Activated CD8-positive, alpha-beta memory T cell treated with anti-CD3 and anti-CD28 coated beads, Interleukin-2, amount 10 ng/mL, durations not matched to agents 7 days and 5 days (primary cell): ENCODE measurements at regions of chr20 and their contacts with region 1.

Region 1: DNA sequence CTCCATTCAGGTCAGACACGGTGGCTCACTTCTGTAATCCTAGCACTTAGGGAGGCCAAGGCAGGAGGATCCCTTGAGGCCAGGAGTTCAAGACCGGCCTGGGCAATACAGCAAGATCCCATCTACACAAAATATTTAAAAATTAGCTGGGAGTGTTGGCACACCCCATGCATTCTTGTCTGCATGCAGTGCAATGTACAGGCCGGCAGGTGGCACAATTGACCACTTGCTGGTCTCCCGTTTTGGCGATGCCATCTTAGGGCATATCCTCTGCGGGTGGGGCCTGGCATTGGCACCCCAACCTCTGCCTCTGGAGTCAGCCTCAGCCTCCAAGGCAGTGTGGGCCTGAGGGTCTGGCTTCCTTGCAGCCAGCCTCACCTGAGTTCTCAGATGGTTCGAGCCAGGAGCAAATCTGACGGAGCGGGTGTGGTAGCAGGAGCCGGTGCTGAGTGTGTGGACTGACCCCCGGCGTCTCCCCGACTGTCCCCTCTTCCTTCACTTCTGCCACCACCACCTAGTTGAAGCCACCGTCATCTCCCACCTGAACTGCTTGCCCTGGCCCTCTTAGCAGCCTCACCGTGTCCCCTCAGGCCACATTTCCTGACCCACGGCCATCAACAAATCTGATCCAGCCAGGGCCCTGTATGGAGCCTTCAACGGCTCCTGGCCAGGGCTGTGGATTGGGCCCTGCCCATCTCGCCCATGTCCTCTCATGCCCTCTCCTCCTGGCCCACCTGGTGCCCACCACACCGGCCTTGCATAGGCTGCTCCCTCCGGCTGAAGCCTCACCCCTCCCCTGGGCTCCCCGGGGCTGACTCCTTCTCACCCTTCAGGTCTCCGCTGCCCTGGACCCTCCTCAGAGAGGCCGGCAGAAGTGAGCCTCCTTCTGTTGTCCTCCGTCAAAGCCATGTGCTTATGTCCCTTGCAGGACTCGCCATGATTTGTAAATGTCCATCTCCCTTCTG is 44.0 kb downstream of the EFCAB8 start:
- DNase-seq: peak; percentile 78
- ATAC-seq: peak; percentile 88
- H3K4me3 Mint-ChIP-seq: no peak overlapping the region
- H3K27ac Mint-ChIP-seq: no peak overlapping the region
- H3K4me1 Mint-ChIP-seq: peaks cover 9% of the 10 kb centered on the region
- H3K27me3 Mint-ChIP-seq: no peaks in the 10 kb centered on the region

Region 2: DNA sequence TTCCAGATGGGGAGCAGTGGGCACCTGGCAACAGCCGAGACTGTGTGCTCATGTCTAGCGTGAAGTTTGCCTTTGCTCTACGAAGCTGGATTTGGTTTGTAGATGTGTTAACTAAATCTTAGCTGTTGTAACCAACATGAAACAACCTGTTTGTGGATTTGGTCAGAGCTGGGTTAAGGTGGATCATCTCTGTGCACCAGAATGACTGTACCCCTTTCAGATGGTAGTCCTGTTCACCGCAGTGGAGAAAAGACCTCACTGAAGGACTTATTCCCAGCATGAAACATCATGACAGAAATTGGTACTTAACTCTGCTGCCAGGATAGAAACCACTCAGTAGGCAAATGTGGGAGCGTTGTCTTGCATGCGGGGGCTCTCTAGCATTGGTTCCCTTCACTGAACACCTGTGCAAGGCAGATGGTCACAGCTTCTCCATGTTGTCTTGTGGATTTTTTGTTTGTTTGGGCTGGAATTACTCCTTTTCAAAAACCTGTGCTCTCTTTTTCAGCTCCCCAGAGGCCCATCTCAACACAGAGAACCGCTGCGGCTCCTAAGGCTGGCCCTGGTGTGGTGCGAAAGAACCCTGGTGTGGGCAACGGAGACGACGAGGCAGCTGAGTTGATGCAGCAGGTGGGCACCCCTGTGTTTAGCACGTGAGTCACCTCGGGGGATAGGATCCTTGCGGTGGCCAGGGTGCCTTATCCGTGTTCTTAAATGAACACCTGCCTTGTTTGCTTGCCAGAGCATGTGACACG is 63.3 kb before region 1 on chr20:
- CTCF ChIA-PET with region 1: no interaction called
- DNase-seq: peak; percentile 52
- ATAC-seq: peak; percentile 60
- H3K4me3 Mint-ChIP-seq: no peak overlapping the region
- H3K27ac Mint-ChIP-seq: no peak overlapping the region
- H3K4me1 Mint-ChIP-seq: peaks cover 42% of the 10 kb centered on the region
- H3K27me3 Mint-ChIP-seq: no peaks in the 10 kb centered on the region

Region 3: DNA sequence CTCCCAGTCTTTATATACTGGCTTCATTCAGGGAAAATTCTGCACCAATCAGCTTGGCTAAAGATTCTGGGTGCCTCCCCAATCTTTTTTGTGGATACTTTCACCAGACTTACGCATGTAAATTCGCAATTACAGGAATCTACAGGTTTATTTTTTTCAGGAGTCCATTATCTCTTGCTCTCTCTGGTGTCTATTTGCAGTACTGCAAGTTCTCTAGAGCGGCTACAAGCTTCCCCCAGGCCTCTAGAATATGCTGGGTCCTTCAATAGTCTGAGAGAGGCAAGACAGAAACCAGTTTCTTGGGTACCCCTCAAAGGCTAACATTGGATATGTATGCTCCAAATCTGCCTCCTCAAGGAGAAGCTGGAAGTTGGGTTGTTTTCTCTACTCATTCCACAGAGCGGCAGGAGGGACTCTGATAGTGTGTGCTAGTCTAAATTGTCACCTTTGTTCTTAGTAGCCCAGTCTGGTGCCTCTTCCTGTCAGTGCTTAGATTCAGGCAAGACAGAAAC is 43.0 kb after region 1 on chr20:
- CTCF ChIA-PET with region 1: interaction called, 26 read pairs
- DNase-seq: no peak
- ATAC-seq: peak; percentile 93
- H3K4me3 Mint-ChIP-seq: no peak overlapping the region
- H3K27ac Mint-ChIP-seq: peak overlapping the region; percentile 76
- H3K4me1 Mint-ChIP-seq: peaks cover 15% of the 10 kb centered on the region
- H3K27me3 Mint-ChIP-seq: peaks cover 2% of the 10 kb centered on the region

Region 4: DNA sequence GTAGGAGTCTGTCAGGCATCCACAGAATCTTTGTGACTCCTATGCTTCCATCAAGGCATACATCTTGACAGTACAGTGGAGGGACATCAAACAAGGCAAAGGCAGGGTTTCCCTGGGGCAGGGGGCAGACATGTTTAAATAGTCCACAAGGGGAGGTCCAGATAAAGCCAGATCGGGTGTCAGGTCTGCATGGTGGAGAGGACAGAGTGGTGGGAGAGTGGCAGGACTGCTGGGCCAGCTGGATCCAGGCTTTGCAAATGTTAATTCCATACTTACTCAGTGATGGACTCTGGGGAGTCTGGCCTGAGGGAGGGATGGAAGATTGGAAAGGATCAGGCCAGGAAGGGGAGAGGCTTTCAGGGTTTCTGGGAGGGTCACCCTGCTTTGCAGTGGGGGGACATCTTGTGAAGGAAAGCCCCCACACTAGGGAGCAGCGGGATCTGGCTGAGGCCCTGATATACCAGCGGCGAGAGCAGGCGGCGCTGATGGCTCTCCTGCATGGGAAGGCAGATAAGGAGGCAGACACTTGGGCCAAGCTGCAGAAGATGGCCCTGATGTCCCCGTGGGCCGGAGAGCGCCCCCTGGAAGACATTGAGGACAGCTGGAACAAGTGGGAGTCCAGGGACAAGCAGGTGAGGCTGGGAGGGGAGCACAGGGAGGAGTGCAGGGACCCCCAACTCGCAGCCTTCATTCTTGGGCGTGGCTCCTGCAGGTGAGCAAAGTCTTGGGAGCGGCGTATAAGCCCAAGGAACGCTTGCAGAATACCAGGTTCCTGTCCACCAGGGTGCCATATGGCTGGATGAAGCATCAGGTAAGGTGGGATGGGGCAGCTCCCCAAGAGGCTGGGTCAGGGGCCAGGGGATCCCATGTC is 56.8 kb after region 1 on chr20:
- CTCF ChIA-PET with region 1: no interaction called
- DNase-seq: no peak
- ATAC-seq: no peak
- H3K4me3 Mint-ChIP-seq: no peak overlapping the region
- H3K27ac Mint-ChIP-seq: no peak overlapping the region
- H3K4me1 Mint-ChIP-seq: peaks cover 22% of the 10 kb centered on the region
- H3K27me3 Mint-ChIP-seq: no peaks in the 10 kb centered on the region

Region 5: DNA sequence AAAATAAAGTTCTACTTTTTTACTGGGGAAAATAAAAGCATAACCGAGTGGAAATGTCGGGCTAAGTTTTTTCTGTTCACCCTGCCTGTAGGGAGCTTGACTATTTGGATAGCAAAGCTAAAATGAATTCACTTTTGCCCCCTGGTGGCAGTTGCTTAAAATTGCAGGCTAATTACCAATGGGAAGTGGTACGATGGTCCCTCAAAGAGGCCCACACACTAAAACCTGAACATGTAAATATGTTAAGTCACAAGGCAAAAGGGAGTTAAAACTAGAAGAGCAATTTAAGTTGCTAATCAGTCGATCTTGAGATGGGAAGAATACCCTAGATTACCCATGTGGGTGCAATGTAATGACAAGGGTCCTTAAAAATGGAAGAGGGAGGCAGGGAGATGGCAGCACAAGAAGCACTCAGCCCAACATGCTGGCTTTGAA is 102.4 kb after region 1 on chr20:
- CTCF ChIA-PET with region 1: interaction called, 32 read pairs
- DNase-seq: no peak
- ATAC-seq: no peak
- H3K4me3 Mint-ChIP-seq: no peak overlapping the region
- H3K27ac Mint-ChIP-seq: no peak overlapping the region
- H3K4me1 Mint-ChIP-seq: peaks cover 3% of the 10 kb centered on the region
- H3K27me3 Mint-ChIP-seq: no peaks in the 10 kb centered on the region

Region 6: GRCh38 chr20:33076662-33077372 is 174.1 kb after region 1 on chr20:
- CTCF ChIA-PET with region 1: interaction called, 33 read pairs
- DNase-seq: no peak
- ATAC-seq: no peak
- H3K4me3 Mint-ChIP-seq: no peak overlapping the region
- H3K27ac Mint-ChIP-seq: no peak overlapping the region
- H3K4me1 Mint-ChIP-seq: no peaks in the 10 kb centered on the region
- H3K27me3 Mint-ChIP-seq: no peaks in the 10 kb centered on the region

Region 7: GRCh38 chr20:33097001-33097400 is 194.3 kb after region 1 on chr20:
- CTCF ChIA-PET with region 1: interaction called, 30 read pairs
- DNase-seq: no peak
- ATAC-seq: no peak
- H3K4me3 Mint-ChIP-seq: no peak overlapping the region
- H3K27ac Mint-ChIP-seq: no peak overlapping the region
- H3K4me1 Mint-ChIP-seq: no peaks in the 10 kb centered on the region
- H3K27me3 Mint-ChIP-seq: no peaks in the 10 kb centered on the region

Region 8: DNA sequence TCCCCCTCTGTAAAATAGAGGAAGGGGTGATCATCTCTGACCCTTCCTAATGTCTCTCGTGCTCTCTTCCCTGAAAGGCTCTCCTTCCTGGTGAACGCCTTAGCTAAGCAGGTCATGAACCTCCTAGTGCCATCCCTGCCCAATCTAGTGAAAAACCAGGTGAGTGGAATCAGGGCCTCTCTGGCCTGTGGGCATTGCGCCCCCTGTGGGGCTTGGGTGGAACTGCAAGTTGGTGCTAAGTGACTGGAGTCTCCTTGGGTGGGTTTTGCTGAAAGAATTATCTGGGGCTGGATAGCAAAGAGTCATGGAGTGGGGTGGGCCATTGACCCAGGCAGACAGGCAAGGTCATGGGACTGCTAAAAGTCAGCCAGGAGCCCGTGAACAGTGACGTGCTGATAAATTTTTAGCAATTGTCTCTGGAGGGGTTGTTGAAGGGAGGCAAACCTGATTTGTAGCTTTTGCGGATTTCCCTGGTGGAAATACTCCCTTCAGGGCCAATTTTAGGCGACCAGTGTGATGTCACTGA is 389.2 kb after region 1 on chr20:
- CTCF ChIA-PET with region 1: interaction called, 10 read pairs
- DNase-seq: peak; percentile 73
- ATAC-seq: no peak
- H3K4me3 Mint-ChIP-seq: no peak overlapping the region
- H3K27ac Mint-ChIP-seq: no peak overlapping the region
- H3K4me1 Mint-ChIP-seq: no peaks in the 10 kb centered on the region
- H3K27me3 Mint-ChIP-seq: peaks cover 21% of the 10 kb centered on the region

Region 9: DNA sequence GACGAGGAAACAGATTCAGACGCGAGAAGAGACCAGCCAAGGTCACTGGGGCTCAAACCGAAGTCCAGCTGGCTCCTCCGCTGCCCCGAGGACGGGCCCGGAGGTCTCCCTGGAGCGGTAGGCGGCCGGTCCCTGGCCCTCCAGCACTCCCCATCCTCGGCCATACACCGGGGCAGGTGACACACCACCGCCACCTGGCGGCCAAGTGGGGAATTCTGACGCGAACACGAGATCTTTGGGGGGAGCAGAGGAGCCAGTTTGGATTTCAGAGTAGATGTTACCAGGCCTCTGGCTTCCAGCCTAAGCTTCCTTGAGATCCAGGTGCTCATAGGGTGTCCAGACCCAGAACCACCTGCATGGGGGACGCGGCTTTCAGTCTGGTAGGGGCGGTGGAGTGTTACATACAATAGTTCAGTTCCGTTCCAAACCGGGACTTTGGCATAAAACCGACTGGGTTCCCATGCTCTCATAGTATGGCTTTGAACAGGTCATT is 396.4 kb after region 1 on chr20:
- CTCF ChIA-PET with region 1: interaction called, 11 read pairs
- DNase-seq: peak; percentile 77
- ATAC-seq: peak; percentile 87
- H3K4me3 Mint-ChIP-seq: no peak overlapping the region
- H3K27ac Mint-ChIP-seq: no peak overlapping the region
- H3K4me1 Mint-ChIP-seq: peaks cover 5% of the 10 kb centered on the region
- H3K27me3 Mint-ChIP-seq: peaks cover 14% of the 10 kb centered on the region